Heart left ventricle (tissue), 16 donors: ENCODE measurements at regions of chr4 and their contacts with region 1.

Region 1: DNA sequence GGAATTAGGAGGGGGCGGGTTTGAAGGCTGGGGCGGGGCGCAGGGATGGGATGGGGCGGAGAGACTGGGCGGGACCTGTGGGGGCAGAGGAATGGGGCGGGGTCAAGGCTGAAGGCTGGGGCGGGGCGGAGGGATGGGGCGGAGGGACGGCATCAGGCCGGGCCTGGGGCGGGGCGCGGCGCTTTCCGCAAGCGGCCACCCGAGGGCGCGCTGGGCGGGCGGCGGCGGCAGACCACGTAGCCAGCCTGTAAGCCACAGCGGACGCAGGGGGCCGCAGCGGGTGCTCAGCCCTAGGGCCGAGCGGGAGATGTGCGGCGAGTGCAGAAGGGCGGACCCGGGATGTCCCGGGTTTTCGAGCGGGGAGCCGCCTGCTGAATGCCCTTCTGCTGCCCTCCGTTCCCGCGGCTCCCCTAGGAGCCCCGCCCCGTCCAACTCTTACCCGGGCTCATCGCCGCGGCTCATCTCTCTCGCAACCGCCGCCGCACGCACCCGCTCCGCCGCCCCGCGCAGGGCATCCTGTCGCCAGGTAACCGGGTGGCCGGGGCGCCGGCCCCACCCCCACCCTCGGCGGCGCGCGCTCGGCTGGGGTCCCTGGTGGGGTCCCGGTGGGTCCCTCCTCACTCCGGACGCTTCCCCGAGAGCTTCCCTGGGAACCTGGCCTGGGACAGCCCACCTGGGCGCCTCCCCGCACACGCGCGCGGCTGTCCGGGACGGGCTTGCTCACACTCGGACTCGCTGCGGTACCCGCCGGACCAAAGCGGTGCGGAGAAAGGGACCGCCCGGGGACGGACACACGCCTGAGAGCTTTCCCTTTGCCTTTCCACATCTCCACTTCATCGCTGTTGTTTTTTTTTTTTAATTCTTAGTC is at the start of gene CCDC110:
- DNase-seq: peak; percentile 92 to 98 (median 97)
- ATAC-seq: peak; percentile 96 to 99 (median 98)
- H3K4me3 ChIP-seq: peak within 1 kb of the TSS; percentile 68 to 97 (median 88)
- H3K27ac ChIP-seq: peak within 1 kb of the TSS in 11 of 12 donors; percentile 17 to 83 (median 57)
- H3K4me1 ChIP-seq: peaks cover 0 to 17% (median 6%) of the 10 kb centered on the region in 12 donors
- H3K27me3 ChIP-seq: peaks cover 0 to 11% (median 0%) of the 10 kb centered on the region in 9 donors
- CTCF ChIP-seq: peak; percentile 46 to 96 (median 78)
- POLR2A ChIP-seq: peak in 1 of 2 donors; percentile 51
- total RNA-seq, gene CCDC110: 0.62 to 2.6 (median 1.1) TPM

Region 2: GRCh38 chr4:185332575-185333464 is 138.6 kb before region 1 on chr4:
- intact Hi-C with region 1: no loop called
- DNase-seq: no peak
- ATAC-seq: no peak
- H3K4me3 ChIP-seq: no peak overlapping the region
- H3K27ac ChIP-seq: no peak overlapping the region
- H3K4me1 ChIP-seq: no peaks in the 10 kb centered on the region
- H3K27me3 ChIP-seq: no peaks in the 10 kb centered on the region
- CTCF ChIP-seq: no peak
- POLR2A ChIP-seq: no peak

Region 3: DNA sequence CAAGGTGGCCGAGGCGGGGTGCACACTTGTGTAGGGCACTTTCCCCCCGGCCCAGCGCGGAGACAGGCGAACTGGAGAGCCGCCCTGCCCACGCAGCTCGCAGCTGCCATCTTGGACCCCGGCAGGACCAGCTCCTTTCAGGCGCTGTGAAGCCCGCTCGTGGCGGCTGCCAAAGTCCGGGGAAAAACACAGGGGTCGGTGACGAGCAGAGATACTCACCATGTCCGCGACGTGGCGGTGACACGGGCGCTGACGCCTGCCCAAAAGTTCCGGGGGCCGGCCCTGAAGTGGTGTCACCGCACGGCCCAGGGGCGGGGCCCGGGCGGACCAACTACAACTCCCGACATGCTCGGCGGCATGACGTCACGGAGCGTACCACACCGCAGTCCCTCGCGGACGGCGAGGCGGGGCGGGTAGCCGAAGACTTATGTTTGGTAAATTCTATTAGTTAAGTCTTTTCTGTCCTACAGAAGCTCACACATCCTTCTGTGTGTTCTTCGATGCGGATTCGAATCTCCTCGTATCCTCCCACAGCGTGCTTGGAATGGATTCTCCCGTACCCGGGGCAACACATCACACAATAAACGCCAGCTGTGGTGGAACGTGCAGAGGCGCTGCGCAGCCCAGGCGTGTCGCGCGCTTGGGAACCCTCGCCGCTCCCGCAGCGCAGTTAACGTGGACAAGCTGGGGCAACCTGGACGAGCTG is 45.7 kb before region 1 on chr4 and contains the start of gene UFSP2:
- intact Hi-C with region 1: loop called in 5 of 10 experiments (anchors 2 to 5 kb)
- DNase-seq: peak; percentile 89 to 94 (median 90)
- ATAC-seq: peak; percentile 96 to 98 (median 97)
- H3K4me3 ChIP-seq: peak within 1 kb of the TSS; percentile 73 to 96 (median 80)
- H3K27ac ChIP-seq: peak within 1 kb of the TSS; percentile 84 to 99 (median 96)
- H3K4me1 ChIP-seq: peaks cover 0 to 41% (median 28%) of the 10 kb centered on the region in 12 donors
- H3K27me3 ChIP-seq: no peaks in the 10 kb centered on the region
- CTCF ChIP-seq: no peak
- POLR2A ChIP-seq: peak in 1 of 2 donors; percentile 82
- total RNA-seq, gene UFSP2: 25.2 to 52.4 (median 35.1) TPM

Region 4: DNA sequence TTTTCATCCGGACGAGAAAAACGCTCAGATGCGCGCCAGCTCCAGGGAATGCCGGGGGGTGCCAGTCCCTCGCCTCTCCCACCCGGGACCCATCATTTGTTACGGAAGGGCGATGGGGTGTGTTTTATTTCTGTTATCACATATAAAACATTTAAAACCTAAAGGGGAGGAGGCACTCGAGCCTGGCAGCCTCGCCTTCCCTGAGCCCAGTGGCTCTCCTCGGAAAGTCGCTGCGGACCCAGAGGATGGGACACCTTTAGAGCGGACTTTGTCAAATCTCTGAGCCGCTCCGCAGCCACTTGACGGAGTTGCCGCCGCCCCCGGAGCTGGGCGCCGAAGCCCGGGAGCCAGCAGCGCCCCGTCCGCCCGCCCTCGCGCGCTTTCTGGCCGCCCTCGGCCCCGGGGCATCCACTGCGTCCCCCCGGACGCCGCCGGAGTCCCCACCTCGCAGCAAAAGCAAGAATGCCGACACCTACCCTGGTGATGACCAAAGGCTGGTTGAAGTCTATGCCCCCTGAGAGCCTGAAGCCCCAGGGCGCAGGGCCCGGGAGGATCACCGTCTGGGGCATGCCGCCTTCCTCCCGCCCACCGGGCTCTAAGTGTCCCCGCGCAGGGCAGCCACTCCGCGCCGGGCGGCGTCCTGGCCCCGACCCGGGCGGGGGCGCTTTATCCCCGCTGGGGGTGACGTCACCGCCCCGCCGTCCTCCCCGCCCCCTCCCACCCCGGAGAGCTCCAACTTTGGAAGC is 63.6 kb after region 1 on chr4 and contains the start of gene PDLIM3:
- intact Hi-C with region 1: loop called in 2 of 10 experiments (anchors 5 kb)
- DNase-seq: peak; percentile 55 to 87 (median 83)
- ATAC-seq: peak; percentile 51 to 89 (median 80)
- H3K4me3 ChIP-seq: peak within 1 kb of the TSS; percentile 67 to 98 (median 84)
- H3K27ac ChIP-seq: peak within 1 kb of the TSS; percentile 84 to 99 (median 97)
- H3K4me1 ChIP-seq: peaks cover 0 to 38% (median 5%) of the 10 kb centered on the region in 12 donors
- H3K27me3 ChIP-seq: peaks cover 0 to 24% (median 0%) of the 10 kb centered on the region in 9 donors
- CTCF ChIP-seq: peak in 1 of 12 donors; percentile 20
- POLR2A ChIP-seq: peak; percentile 93 to 99
- total RNA-seq, gene PDLIM3: 111 to 1,156 (median 246) TPM

Region 5: DNA sequence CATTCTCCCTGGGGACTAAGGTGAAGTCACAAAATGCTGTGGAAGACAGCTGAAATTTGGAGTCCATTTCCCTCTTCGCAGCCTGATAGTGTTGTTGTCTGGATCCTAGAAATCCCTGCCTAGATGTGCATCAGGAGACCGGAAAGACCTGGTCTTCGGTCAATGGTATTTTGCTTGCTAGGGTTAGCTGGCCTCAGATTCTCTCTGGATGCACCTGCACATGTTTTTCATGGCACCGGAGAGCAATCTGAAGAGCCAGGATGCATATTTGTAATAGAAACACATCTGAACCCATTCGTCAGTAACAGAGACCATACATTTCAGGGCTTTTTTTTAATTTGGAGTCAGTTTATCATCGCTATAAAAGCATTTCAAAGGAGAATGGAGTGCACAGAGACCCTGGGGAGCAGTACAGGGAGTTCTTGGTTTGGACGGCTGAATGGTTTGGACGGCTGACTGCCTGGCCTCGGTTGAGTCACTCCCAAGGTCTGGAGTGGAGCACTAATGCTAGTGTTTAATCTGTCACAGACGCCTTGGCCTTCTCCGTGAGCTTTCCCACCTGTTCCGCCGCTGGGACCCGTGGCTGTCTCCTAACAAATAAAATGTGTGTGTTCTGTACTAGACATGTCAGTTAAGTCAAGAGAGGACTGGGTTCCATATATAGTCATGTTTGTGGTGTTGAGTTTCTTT is 71.3 kb after region 1 on chr4:
- intact Hi-C with region 1: loop called in 1 of 10 experiments (anchors 5 kb)
- DNase-seq: peak; percentile 77 to 83 (median 79)
- ATAC-seq: peak; percentile 75 to 91 (median 90)
- H3K4me3 ChIP-seq: peak overlapping the region in 1 of 12 donors; percentile 3
- H3K27ac ChIP-seq: peak overlapping the region in 6 of 12 donors; percentile 40 to 72 (median 62)
- H3K4me1 ChIP-seq: peaks cover 0 to 23% (median 12%) of the 10 kb centered on the region in 12 donors
- H3K27me3 ChIP-seq: no peaks in the 10 kb centered on the region
- CTCF ChIP-seq: no peak
- POLR2A ChIP-seq: no peak

Region 6: DNA sequence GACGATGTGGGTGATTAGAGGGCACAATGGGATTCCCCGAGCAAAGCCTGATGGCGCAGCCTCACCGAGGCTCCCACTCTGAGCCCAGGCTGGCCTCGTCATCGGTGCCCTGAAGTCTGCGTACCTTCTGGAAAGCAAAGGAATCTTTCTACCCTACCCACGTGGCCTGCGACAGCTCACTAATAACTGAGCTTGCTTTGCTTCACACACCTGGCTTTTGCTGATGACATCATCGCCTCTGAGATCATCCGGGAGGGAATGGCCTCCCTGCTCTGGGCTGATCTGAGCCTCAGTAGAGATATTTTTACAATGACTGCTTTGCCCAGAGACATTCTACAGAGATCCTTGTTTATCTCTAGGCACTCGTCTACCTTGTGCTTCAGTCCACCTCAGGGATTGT is 109.2 kb after region 1 on chr4:
- intact Hi-C with region 1: loop called in 2 of 10 experiments (anchors 5 kb)
- DNase-seq: no peak
- ATAC-seq: no peak
- H3K4me3 ChIP-seq: no peak overlapping the region
- H3K27ac ChIP-seq: peak overlapping the region in 1 of 12 donors; percentile 61
- H3K4me1 ChIP-seq: peaks cover 0 to 23% (median 9%) of the 10 kb centered on the region in 12 donors
- H3K27me3 ChIP-seq: no peaks in the 10 kb centered on the region
- CTCF ChIP-seq: no peak
- POLR2A ChIP-seq: no peak

Region 7: DNA sequence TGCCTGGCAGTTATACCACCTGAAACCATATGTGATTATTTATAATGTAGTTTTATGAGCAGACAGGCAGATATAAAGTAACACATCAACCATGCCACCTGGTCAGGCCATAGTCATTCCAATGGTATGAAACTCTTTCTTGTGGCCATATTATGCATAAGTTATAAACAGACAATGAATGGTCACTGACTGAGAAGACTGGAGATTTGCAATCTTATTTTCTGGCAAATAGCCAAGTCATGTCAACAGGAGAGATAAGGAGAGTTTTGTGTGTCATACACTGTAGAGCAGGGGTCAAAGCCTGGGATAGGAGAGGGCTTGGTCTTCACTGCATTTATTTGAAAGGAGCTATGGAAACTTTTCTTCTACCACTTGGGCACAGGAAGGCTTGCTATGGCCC is 311.1 kb after region 1 on chr4:
- intact Hi-C with region 1: no loop called
- DNase-seq: no peak
- ATAC-seq: peak in 2 of 4 donors; percentile 1 to 48
- H3K4me3 ChIP-seq: no peak overlapping the region
- H3K27ac ChIP-seq: peak overlapping the region in 11 of 12 donors; percentile 36 to 95 (median 68)
- H3K4me1 ChIP-seq: peaks cover 0 to 87% (median 29%) of the 10 kb centered on the region in 12 donors
- H3K27me3 ChIP-seq: no peaks in the 10 kb centered on the region
- CTCF ChIP-seq: no peak
- POLR2A ChIP-seq: no peak

Region 8: GRCh38 chr4:186037692-186038658 is 566.5 kb after region 1 on chr4:
- intact Hi-C with region 1: loop called in 3 of 10 experiments (anchors 10 kb)
- DNase-seq: peak in 2 of 5 donors; percentile 49 to 68
- ATAC-seq: peak; percentile 49 to 87 (median 79)
- H3K4me3 ChIP-seq: no peak overlapping the region
- H3K27ac ChIP-seq: peak overlapping the region in 1 of 12 donors; percentile 49
- H3K4me1 ChIP-seq: peaks cover 0 to 11% (median 6%) of the 10 kb centered on the region in 12 donors
- H3K27me3 ChIP-seq: no peaks in the 10 kb centered on the region
- CTCF ChIP-seq: peak; percentile 73 to 92 (median 83)
- POLR2A ChIP-seq: no peak